Astrocyte of the cerebellum (primary cell): ENCODE measurements at regions of chr13 and their contacts with region 1.

Region 1: DNA sequence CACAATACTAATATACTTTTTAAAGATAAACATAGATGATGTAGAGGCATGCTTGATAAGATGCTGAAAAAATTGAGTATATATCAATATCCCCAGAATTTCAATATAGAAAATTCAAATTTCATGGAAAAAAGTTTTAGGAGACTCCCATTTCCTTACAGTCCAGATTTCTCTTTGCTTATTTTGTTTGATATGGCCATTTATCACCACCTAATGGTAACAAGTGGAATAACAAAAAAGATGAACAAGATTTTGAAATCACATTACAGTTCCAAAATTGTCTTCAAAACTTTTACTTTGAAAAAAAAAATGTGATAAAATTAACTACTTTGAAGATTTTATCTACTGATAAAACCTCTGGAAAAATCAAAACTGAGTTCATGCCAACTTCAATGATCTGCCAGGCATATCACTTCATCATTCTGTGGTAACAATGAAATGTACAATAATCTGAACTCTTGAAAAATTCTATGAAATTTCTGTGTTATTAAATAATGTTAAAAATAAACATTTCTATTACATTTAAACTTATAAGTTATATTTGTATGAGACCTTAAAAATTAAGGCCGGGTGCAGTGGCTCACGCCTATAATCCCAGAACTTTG is 17.5 kb downstream of the MIPEP start:
- DNase-seq: peak; percentile 36
- H3K4me3 ChIP-seq: no peak overlapping the region
- CTCF ChIP-seq: no peak

Region 2: DNA sequence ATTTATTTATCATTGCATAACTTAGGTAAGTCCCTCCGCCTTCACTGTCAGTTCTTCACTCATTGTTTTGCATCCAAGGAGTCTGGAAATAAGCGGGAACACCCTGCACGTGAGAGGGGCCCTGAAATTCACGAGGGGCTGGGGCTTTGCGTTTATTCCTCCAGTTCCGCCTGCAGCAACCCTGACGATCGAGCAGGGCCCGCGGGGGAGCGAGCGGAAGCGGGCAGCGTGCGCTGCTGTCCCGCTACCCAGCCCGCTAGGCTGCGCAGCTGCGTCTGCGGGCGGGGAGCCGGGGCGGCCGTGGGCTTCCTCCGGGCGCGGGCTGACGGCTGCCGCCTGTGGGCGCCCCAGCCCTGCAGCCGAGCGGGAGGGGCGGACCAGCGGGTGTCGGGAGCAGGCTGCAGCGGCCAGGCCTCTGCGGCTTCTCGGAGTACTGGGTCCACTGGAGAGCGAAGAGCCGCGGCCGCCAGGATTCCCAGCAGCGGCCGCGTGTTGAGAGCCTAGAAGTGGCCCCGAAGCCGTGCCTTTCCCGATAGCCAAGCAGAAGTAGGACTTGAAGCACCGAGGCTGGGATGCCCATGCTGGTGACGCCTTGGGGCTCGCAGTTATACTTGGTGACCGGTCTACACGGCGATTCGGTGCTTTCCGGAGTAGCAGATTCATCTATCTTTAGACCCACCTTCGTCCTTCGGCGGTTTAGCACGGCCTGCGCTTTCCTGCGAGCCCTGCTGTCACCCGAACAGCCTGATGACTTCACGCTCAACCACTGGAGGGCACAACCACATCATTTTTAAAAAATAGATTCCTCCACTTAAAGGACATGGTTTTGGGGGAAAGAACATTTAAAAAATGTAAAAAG is 405.3 kb before region 1 on chr13:
- in situ Hi-C with region 1: loop called (anchors 25 kb)
- DNase-seq: peak; percentile 67
- H3K4me3 ChIP-seq: peak overlapping the region; percentile 36
- CTCF ChIP-seq: peak; percentile 58